ENCODE measurements at regions of chr1 and their contacts with region 1.

Region 1: GRCh38 chr1:218394416-218394815 is 49.3 kb downstream of the TGFB2 start:
- DNase-seq: peak; percentile 46 to 70
- ATAC-seq: peak; percentile 98 to 100
- H3K4me3 ChIP-seq: peak overlapping the region; percentile 4 to 43 (median 15)
- H3K27ac ChIP-seq: peak overlapping the region; percentile 71 to 84 (median 81)
- H3K4me1 ChIP-seq: peaks cover 8 to 30% of the 10 kb centered on the region in 2 donors
- H3K27me3 ChIP-seq: no peaks in the 10 kb centered on the region
- CTCF ChIP-seq: no peak
- POLR2A ChIP-seq: no peak

Region 2: GRCh38 chr1:218412171-218412570 is 17.8 kb after region 1 on chr1:
- in situ Hi-C with region 1: no loop called
- intact Hi-C with region 1: loop called (anchors 2 kb)
- DNase-seq: no peak
- ATAC-seq: no peak
- H3K4me3 ChIP-seq: no peak overlapping the region
- H3K27ac ChIP-seq: peak overlapping the region in 3 of 4 donors; percentile 25 to 77 (median 68)
- H3K4me1 ChIP-seq: peaks cover 38 to 54% of the 10 kb centered on the region in 2 donors
- H3K27me3 ChIP-seq: no peaks in the 10 kb centered on the region
- CTCF ChIP-seq: no peak
- POLR2A ChIP-seq: no peak

Region 3: DNA sequence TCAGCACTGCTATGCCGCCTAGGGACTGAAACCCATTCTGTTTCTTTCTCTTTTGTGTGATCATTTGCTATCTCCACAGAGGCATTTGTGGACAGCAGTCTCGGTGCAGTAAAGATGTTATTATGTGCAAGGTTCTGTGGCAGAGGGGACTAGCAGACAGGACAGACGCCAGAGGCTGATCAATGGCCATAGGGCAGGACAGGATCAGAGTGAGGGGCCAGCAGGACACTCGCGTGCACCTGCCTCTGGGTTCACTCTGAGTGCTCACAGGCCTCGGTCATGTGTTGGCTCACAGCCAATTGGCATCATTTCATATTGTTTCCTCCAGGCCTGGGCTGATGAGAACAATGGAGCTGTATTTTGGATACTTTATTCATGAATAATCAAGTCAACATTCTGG is 163.3 kb after region 1 on chr1:
- in situ Hi-C with region 1: no loop called
- intact Hi-C with region 1: no loop called
- DNase-seq: no peak
- ATAC-seq: no peak
- H3K4me3 ChIP-seq: no peak overlapping the region
- H3K27ac ChIP-seq: no peak overlapping the region
- H3K4me1 ChIP-seq: no peaks in the 10 kb centered on the region
- H3K27me3 ChIP-seq: no peaks in the 10 kb centered on the region
- CTCF ChIP-seq: no peak
- POLR2A ChIP-seq: no peak

Measured in gastrocnemius medialis (tissue), 4 donors.